Activated T-helper 2 cell treated with anti-CD3 and anti-CD28 coated beads, Interferon-gamma antibody, Interleukin-2, Interleukin-4, amounts not matched to agents 10 μg/mL and 5 μg/mL and 100 μg/mL, durations not matched to agents 14 hours and 24 hours and 36 hours (primary cell): ENCODE measurements at regions of chr7 and their contacts with region 1.

Region 1: DNA sequence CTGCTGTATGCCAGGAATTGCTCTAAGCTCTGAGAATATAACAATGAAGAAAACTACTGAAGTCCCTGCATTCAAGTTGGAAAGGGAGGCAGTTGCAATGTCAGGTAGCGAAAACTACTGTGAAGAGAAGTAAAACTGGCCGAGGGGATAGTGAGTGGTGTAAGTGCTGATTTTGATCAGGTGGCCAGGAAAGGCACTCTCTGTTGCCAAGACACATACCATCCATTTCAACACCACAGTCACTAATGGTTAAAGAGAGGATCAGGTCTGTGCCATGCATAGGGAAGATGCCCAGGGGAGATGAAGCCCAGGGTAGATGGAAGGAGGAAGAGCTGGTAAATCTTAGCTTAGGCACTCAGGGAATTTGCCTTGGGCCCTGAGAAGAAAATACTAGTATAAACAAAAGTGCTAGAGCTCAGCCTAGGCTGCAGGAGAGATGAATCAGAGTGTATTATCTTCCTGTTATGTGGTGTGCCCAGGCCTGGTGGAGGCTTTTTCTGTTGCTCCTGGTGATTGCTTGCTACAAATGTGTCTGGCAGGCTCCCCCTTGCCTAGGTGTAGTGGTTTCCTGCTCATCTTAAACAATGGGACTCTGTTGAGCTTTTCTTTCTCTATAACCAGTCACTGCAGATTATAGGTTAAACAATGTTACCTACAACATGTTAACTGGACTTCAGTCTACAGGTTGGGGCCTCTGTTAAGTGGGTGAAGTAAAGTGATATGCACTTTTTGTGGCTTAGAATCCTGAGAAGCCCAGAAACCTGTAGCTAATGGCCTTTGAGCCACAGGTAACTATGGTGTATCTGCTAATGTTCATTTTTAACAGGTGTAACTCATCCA is 125.5 kb downstream of the LRRC4 start:
- DNase-seq: peak; percentile 10
- H3K4me3 Mint-ChIP-seq: no peak overlapping the region
- H3K27ac Mint-ChIP-seq: peak overlapping the region; percentile 61
- H3K4me1 Mint-ChIP-seq: peaks cover 62% of the 10 kb centered on the region
- H3K27me3 Mint-ChIP-seq: no peaks in the 10 kb centered on the region

Region 2: DNA sequence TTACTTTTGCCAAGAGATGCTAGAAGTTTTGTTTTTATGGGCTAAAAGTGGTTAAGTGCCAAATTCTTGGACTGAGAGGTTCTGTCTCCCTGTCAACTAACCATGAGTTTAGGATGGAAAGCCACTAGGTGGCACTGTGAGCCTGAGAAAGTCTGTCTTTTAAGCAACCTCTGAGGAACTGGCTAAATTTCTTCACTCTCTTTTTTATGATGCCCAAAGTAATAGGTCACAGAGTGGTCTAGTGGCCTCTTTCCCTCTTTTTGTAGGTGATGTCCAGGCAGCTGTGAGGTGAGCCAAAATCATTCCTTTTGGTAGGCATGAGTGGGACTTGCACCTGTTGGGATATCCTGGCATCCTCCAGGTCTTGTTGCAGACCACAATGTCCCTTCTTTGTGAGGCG is 196.9 kb before region 1 on chr7:
- intact Hi-C with region 1: loop called (anchors 5 kb)
- DNase-seq: peak; percentile 35
- H3K4me3 Mint-ChIP-seq: no peak overlapping the region
- H3K27ac Mint-ChIP-seq: no peak overlapping the region
- H3K4me1 Mint-ChIP-seq: peaks cover 6% of the 10 kb centered on the region
- H3K27me3 Mint-ChIP-seq: no peaks in the 10 kb centered on the region

Region 3: DNA sequence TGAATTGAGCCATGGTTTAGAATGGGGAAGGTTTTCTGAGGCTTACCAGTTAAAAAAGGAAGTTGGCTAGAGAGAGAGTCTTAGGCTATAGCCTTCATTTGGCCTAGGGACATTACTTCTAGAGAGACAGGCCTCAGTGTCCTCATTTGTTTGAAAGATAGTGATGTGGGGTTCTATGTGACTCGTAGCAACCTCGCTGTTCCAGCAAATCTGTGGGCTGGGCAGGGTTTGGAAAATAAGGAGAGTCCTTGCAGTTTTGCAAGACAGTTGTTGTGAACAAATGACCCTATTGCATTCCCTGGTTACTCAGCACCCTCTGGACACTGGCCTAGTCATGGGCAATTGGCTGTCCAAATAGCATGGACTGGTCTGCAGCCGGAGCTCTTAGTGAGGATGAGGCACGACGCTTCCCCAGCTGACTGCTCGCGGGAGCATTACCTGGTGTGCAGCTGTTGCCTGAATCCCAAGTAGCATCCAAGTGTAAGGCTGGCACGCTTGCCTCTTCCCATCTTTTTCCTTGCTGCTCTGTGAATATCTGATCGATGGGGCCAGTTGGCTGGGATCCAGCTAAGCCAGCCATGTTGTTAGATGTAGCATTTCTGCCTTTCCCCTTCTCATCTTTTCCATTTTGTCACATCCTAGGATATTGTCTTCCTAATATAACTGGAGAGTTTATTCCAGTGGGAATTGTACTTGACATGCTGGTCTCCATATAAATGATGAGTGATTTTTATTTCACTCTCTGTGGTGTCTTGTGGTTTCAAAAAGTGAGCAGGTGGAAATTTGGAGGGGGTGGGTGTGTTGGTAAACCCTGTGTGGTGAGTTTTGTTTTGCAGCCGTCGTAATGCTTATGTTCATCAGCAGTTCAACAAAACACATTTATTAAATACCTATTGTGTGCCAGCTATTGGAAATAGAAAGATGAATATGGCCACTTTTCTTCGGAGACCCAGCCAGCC is 153.9 kb before region 1 on chr7:
- intact Hi-C with region 1: no loop called
- DNase-seq: no peak
- H3K4me3 Mint-ChIP-seq: no peak overlapping the region
- H3K27ac Mint-ChIP-seq: no peak overlapping the region
- H3K4me1 Mint-ChIP-seq: peaks cover 25% of the 10 kb centered on the region
- H3K27me3 Mint-ChIP-seq: no peaks in the 10 kb centered on the region

Region 4: DNA sequence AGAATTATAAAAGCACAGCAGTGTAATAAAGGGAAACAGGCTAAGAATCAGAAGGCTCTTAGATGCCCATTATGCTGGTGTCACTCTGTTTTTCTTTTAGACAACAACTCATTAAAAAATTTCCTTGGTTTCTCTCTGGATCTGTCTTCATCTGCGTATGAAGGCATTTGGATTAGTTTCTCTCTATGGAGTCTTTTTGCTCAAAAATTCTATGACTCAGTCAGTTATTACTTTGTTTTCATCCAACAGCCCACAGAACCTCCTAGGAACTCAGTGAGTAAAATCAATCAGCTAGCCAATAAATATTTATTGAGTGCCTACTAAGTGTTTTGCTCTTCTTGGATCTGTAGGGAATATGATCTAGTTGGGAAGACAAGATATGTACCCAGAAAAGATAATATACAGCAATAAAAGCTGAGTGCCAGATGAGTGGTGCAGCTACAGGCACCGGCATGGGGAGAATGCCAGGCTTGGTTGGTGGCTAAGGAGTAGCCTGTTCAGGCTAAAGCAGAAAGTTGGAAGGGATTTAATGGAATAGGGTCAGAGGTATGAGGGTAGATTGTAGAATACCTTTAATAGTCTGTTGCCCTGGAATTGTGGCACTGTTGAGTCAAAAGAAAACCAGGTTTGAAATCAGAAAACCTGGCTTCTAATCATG is 30.6 kb before region 1 on chr7:
- intact Hi-C with region 1: loop called (anchors 1 kb)
- DNase-seq: no peak
- H3K4me3 Mint-ChIP-seq: no peak overlapping the region
- H3K27ac Mint-ChIP-seq: no peak overlapping the region
- H3K4me1 Mint-ChIP-seq: peaks cover 23% of the 10 kb centered on the region
- H3K27me3 Mint-ChIP-seq: no peaks in the 10 kb centered on the region